ENCODE measurements at regions of chr12 and their contacts with region 1.

Region 1: GRCh38 chr12:4172999-4173398 is 100.6 kb upstream of the CCND2 start:
- DNase-seq: no peak
- H3K4me3 ChIP-seq: no peak overlapping the region
- H3K27ac ChIP-seq: no peak overlapping the region
- H3K4me1 ChIP-seq: no peaks in the 10 kb centered on the region
- H3K27me3 ChIP-seq: no peaks in the 10 kb centered on the region
- CTCF ChIP-seq: no peak

Region 2: DNA sequence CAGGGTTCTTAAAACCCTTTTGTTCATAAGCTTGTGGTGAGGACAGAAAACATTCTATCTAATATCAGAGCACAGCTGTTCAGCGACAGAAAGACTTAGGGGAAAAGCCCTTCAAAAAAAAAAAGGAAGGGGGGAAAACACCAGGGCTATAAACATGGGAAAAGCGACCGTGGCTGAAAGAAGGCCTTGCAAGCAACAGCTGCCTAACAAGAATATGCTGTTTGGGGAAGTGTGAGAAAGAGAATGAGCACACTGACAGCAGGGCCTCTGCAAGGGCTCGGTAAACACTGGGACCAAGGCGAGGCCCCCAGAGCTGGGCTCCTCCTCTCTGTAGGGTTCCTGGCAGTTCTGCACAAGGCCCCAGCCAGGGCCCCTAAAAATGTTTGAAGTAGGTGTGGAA is 73.1 kb after region 1 on chr12:
- intact Hi-C with region 1: loop called (anchors 10 kb)
- DNase-seq: no peak
- H3K4me3 ChIP-seq: no peak overlapping the region
- H3K27ac ChIP-seq: no peak overlapping the region
- H3K4me1 ChIP-seq: no peaks in the 10 kb centered on the region
- H3K27me3 ChIP-seq: no peaks in the 10 kb centered on the region
- CTCF ChIP-seq: no peak

Measured in colonic mucosa (tissue), 4 donors.